CD8-positive, alpha-beta T cell (primary cell): ENCODE measurements at regions of chr3 and their contacts with region 1.

Region 1: DNA sequence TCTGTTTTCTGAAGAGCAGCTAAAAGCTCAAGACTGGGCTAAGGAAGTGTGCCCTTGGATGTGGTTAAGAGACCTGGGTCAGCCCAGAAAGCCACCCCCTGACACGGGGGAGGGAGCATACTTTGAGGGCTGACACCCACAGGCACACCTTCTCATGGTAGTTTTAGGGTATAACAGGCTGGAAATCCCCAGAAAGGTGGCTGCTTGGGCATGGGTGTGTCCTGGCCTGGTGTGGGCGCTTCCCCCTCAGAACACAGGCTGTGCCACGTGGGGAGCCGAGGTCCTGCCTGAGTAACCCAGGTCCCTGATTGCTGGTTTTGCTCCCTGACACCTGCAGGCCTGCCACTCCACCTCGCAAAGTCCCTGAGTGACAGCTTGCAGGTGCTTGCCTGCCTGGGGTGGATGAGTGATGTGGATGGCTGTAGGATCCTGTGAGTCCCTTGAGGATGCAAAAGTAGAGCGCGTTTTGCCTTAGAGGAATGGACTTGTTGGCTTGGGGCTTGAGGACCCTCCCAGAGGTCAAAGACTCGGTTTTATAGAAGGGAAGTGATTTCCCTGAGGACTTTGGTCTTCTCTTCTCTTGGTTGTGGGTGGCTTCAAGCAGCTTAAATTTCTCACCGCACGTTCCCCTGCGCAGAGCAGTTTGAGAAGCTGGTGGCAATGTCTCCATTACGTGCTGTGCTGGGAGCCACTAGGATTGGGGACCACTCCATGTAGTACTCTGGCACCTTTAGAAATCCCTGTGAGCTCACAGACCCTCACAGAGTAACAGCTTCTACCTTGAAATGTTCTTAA is 94.4 kb downstream of the DNASE1L3 start:
- DNase-seq: peak; percentile 29 to 92 (median 67)
- ATAC-seq: peak; percentile 94
- H3K4me3 ChIP-seq: no peak overlapping the region
- H3K4me3 Mint-ChIP-seq: peak overlapping the region; percentile 54
- H3K27ac ChIP-seq: peak overlapping the region; percentile 1 to 42
- H3K27ac Mint-ChIP-seq: peak overlapping the region; percentile 89
- H3K4me1 ChIP-seq: peaks cover 28% of the 10 kb centered on the region
- H3K4me1 Mint-ChIP-seq: peaks cover 44% of the 10 kb centered on the region
- H3K27me3 ChIP-seq: no peaks in the 10 kb centered on the region
- H3K27me3 Mint-ChIP-seq: no peaks in the 10 kb centered on the region
- CTCF ChIP-seq: no peak

Region 2: DNA sequence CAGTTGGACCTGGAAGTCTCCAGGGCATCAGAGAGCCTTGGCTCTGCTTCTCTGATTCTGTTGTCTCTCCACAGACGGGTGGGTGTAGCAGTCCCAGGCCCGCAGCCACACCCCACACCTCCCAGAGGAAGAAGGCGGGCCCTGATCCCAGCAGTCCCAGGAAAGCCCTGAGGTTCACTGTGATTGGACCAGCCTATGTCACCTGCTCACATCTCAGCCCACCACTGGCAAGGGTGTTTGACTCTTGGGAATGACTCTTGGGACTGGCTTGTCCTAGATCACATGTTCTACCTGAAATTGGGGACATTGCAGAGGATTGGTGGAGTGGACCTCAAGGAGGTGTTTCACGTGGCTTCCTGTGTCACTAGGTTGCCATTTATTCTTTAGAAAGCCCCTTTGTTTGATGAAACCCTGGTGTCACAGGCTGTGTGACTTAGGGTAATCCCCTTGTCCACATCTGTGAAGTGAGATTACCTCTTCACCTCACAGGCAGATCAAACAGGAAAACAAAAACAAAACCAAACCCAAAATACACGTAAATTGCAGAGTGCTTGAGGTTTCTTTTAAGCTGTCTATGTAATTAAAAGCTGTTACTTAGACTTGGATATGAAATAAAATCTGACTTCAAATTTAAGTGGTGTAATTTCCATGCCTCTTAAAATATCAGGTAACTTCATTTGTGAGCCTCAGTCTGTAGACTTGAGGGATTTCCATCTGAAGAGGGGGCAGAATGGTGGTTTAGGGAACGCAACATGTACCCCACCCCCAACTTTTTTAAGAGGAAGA is 81.4 kb before region 1 on chr3:
- CTCF ChIA-PET with region 1: no interaction called
- POLR2A ChIA-PET with region 1: no interaction called
- intact Hi-C with region 1: loop called in 1 of 2 experiments (anchors 5 kb)
- DNase-seq: peak in 7 of 9 experiments; percentile 8 to 92 (median 33)
- ATAC-seq: peak; percentile 95
- H3K4me3 ChIP-seq: no peak overlapping the region
- H3K4me3 Mint-ChIP-seq: peak overlapping the region; percentile 66
- H3K27ac ChIP-seq: peak overlapping the region; percentile 18 to 54
- H3K27ac Mint-ChIP-seq: peak overlapping the region; percentile 96
- H3K4me1 ChIP-seq: peaks cover 38% of the 10 kb centered on the region
- H3K4me1 Mint-ChIP-seq: peaks cover 62% of the 10 kb centered on the region
- H3K27me3 ChIP-seq: no peaks in the 10 kb centered on the region
- H3K27me3 Mint-ChIP-seq: no peaks in the 10 kb centered on the region
- CTCF ChIP-seq: no peak

Region 3: DNA sequence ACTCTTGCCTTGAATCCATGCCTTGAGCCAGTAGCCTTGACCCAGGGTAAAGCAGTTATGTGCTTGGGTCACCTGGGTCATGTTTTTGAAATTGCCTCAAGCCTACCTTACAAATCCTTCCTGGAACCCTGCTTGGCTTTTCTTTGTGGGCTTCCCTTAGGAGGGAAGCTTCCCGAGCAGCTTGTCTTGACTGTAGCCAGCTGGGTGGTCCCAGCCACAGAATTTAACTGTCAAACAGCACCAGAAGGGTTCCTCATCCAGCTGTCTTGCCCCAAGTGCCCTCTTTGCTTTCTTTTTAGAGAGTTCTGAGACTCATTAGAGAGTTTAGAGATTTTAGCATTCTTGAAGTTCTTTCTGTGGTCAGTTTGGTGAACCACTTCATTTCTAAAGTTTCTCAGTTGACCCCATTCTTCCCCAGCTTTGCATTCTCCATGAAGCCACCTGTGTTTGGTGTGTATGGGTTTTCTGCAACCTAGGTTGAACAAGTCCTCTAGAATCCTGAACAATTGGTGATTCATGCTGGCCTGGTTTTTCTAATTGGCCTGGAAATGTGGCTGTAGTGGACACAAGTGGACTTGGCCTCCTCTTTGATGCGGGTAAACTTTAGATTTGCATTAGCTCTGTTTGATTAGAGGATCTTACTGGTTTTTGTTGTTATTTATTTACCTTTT is 74.6 kb before region 1 on chr3:
- CTCF ChIA-PET with region 1: interaction called, 4 read pairs
- POLR2A ChIA-PET with region 1: no interaction called
- intact Hi-C with region 1: loop called (anchors 2 to 5 kb)
- DNase-seq: peak in 1 of 9 experiments; percentile 21
- ATAC-seq: no peak
- H3K4me3 ChIP-seq: no peak overlapping the region
- H3K4me3 Mint-ChIP-seq: peak overlapping the region; percentile 22
- H3K27ac ChIP-seq: no peak overlapping the region
- H3K27ac Mint-ChIP-seq: no peak overlapping the region
- H3K4me1 ChIP-seq: peaks cover 30% of the 10 kb centered on the region
- H3K4me1 Mint-ChIP-seq: peaks cover 68% of the 10 kb centered on the region
- H3K27me3 ChIP-seq: no peaks in the 10 kb centered on the region
- H3K27me3 Mint-ChIP-seq: no peaks in the 10 kb centered on the region
- CTCF ChIP-seq: no peak

Region 4: GRCh38 chr3:58151637-58152036 is 35.3 kb after region 1 on chr3:
- CTCF ChIA-PET with region 1: no interaction called
- POLR2A ChIA-PET with region 1: no interaction called
- intact Hi-C with region 1: no loop called
- DNase-seq: no peak
- ATAC-seq: no peak
- H3K4me3 ChIP-seq: no peak overlapping the region
- H3K4me3 Mint-ChIP-seq: no peak overlapping the region
- H3K27ac ChIP-seq: no peak overlapping the region
- H3K27ac Mint-ChIP-seq: no peak overlapping the region
- H3K4me1 ChIP-seq: no peaks in the 10 kb centered on the region
- H3K4me1 Mint-ChIP-seq: no peaks in the 10 kb centered on the region
- H3K27me3 ChIP-seq: no peaks in the 10 kb centered on the region
- H3K27me3 Mint-ChIP-seq: no peaks in the 10 kb centered on the region
- CTCF ChIP-seq: no peak

Region 5: GRCh38 chr3:58419780-58420507 is 303.6 kb after region 1 on chr3:
- CTCF ChIA-PET with region 1: no interaction called
- POLR2A ChIA-PET with region 1: no interaction called
- intact Hi-C with region 1: loop called in 1 of 2 experiments (anchors 10 kb)
- DNase-seq: no peak
- ATAC-seq: no peak
- H3K4me3 ChIP-seq: no peak overlapping the region
- H3K4me3 Mint-ChIP-seq: no peak overlapping the region
- H3K27ac ChIP-seq: no peak overlapping the region
- H3K27ac Mint-ChIP-seq: peak overlapping the region; percentile 5
- H3K4me1 ChIP-seq: no peaks in the 10 kb centered on the region
- H3K4me1 Mint-ChIP-seq: no peaks in the 10 kb centered on the region
- H3K27me3 ChIP-seq: no peaks in the 10 kb centered on the region
- H3K27me3 Mint-ChIP-seq: no peaks in the 10 kb centered on the region
- CTCF ChIP-seq: no peak